Right ventricle myocardium inferior (tissue), 1 donor: ENCODE measurements at regions of chr1 and their contacts with region 1.

Region 1: GRCh38 chr1:172745014-172745413 is 86.1 kb downstream of the FASLG start:
- DNase-seq: no peak
- ATAC-seq: peak; percentile 75

Region 2: GRCh38 chr1:172778456-172779455 is 33.7 kb after region 1 on chr1:
- intact Hi-C with region 1: no loop called
- DNase-seq: no peak
- ATAC-seq: no peak

Region 3: DNA sequence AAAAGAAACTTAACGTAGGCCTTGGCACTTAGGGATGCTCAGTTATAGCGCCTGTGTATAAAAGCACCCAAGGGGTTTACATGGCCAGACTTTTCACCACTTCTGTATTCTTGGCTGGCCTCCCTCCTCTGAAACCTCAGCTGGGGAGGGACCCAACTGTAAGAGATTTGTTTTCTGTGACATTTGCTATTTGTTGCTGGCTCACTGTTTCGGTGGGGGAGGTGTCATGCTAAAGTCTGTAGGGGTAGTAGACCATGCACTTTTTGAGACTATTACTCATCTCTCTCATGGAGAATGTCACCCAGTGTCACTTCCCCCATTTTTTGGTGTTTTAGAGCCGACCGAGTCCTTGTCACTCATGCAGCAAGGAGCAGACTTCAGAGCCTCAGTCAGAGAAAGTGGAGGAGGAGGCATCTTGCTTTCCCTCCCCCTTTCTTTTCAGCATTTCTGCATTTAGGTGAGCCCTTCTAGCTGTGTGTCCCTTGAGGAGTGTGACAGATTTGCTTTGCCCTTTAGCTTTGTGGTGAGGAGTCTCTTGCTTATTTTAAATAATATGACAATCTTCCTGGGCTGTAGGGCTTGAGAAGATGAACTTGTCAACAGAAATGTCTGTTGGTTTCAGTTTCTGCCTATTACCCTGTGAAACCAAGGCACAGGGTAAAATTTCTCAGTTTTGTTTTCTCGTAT is 74.0 kb after region 1 on chr1:
- intact Hi-C with region 1: loop called (anchors 5 kb)
- DNase-seq: no peak
- ATAC-seq: no peak

Region 4: GRCh38 chr1:173202430-173203145 is 457.6 kb after region 1 on chr1:
- intact Hi-C with region 1: loop called (anchors 1 kb)
- DNase-seq: no peak
- ATAC-seq: peak; percentile 76

Region 5: GRCh38 chr1:173409613-173410012 is 664.6 kb after region 1 on chr1:
- intact Hi-C with region 1: loop called (anchors 10 kb)
- DNase-seq: no peak
- ATAC-seq: peak; percentile 62

Region 6: GRCh38 chr1:173824331-173825081 is 1079.5 kb after region 1 on chr1 and contains the starts of genes CENPL and DARS2:
- intact Hi-C with region 1: loop called (anchors 10 kb)
- DNase-seq: peak; percentile 98
- ATAC-seq: peak; percentile 99
- total RNA-seq, gene CENPL: 3.3 TPM
- total RNA-seq, gene DARS2: 13.5 TPM